Activated CD4-positive, alpha-beta memory T cell treated with anti-CD3 and anti-CD28 coated beads, Interleukin-2, amount 10 ng/mL, durations not matched to agents 7 days and 5 days (primary cell): ENCODE measurements at regions of chr12 and their contacts with region 1.

Region 1: DNA sequence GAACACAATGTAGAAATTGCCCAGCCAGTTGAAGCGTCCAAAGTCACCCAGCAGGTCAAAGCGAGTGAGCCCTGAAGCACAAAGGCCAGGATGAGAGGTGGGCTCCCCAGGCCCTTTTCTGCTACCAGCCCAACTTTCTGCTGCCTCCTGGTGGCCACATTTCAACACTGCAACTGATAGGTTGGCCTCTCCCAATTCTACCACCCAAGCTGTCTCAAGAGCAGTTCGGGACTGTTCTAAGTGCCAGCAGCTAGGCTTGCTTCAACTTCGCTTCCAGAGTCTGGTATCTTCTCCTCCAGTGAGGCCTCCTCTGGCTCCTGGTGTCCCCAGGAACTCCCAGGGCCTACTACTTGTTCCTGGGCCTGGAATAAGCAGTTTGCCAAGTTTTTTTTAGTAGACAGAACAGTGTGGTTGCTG is 3.4 kb upstream of the DHH start:
- DNase-seq: peak; percentile 69
- H3K4me3 Mint-ChIP-seq: no peak overlapping the region
- H3K27ac Mint-ChIP-seq: no peak overlapping the region
- H3K4me1 Mint-ChIP-seq: peaks cover 16% of the 10 kb centered on the region
- H3K27me3 Mint-ChIP-seq: peaks cover 25% of the 10 kb centered on the region

Region 2: GRCh38 chr12:49060237-49061156 is 37.5 kb before region 1 on chr12 and contains the start of gene KMT2D:
- CTCF ChIA-PET with region 1: interaction called, 103 read pairs
- POLR2A ChIA-PET with region 1: interaction called, 26 read pairs
- DNase-seq: peak; percentile 88
- H3K4me3 Mint-ChIP-seq: peak within 1 kb of the TSS; percentile 95
- H3K27ac Mint-ChIP-seq: peak within 1 kb of the TSS; percentile 91
- H3K4me1 Mint-ChIP-seq: peaks cover 50% of the 10 kb centered on the region
- H3K27me3 Mint-ChIP-seq: no peaks in the 10 kb centered on the region
- total RNA-seq, gene KMT2D: 82.3 to 87.8 TPM

Region 3: DNA sequence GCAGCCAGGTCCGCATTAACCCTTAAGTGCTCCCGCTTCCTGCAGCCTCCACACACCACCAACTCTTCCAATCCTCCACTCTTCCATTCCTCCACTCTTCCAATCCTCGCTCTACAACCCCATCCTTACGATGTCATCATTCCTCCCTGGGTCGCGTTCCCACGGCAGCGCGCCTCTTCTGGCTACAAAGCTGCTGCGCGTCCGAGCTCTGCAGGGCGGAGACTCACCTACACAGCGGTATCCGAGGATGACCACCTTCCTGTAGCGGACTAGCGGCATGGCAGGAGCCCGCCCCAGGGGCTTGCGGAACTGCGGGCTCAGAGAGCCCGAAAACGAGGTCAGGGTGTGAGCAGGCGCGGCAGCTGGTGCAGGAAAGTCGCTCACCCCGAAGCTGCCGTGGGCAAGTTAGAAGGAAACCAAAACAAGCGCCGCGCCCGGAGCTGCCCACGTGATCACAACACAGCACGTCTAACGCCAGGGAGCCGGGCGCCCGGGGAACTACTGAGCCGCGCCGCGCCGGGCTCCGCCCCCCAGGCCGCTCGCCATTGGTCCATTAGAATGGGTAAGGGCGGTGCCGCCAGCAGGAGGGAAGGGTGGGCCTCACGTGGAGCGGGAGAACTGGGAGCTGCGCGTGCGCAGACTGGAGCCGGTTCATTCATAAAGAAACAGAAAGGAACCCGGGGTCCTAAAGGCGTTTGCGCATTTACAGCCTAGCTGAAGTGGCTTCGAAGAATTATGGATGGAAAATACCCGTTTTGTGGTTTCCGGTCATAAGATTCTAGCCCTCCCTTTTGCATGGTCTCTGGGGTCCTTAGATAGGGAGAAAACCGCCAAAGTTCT is 28.3 kb before region 1 on chr12 and contains the start of gene RHEBL1:
- CTCF ChIA-PET with region 1: interaction called, 103 read pairs
- POLR2A ChIA-PET with region 1: interaction called, 26 read pairs
- DNase-seq: peak; percentile 100
- H3K4me3 Mint-ChIP-seq: peak within 1 kb of the TSS; percentile 97
- H3K27ac Mint-ChIP-seq: peak within 1 kb of the TSS; percentile 86
- H3K4me1 Mint-ChIP-seq: peaks cover 33% of the 10 kb centered on the region
- H3K27me3 Mint-ChIP-seq: no peaks in the 10 kb centered on the region
- total RNA-seq, gene RHEBL1: 14.8 to 15.8 TPM

Region 4: GRCh38 chr12:49110464-49111155 is 12.6 kb after region 1 on chr12 and contains the start of gene LMBR1L:
- CTCF ChIA-PET with region 1: interaction called, 46 read pairs
- POLR2A ChIA-PET with region 1: interaction called, 15 read pairs
- DNase-seq: peak; percentile 97
- H3K4me3 Mint-ChIP-seq: peak within 1 kb of the TSS; percentile 88
- H3K27ac Mint-ChIP-seq: peak within 1 kb of the TSS; percentile 82
- H3K4me1 Mint-ChIP-seq: peaks cover 31% of the 10 kb centered on the region
- H3K27me3 Mint-ChIP-seq: peaks cover 2% of the 10 kb centered on the region
- total RNA-seq, gene LMBR1L: 82.8 to 85.3 TPM

Region 5: DNA sequence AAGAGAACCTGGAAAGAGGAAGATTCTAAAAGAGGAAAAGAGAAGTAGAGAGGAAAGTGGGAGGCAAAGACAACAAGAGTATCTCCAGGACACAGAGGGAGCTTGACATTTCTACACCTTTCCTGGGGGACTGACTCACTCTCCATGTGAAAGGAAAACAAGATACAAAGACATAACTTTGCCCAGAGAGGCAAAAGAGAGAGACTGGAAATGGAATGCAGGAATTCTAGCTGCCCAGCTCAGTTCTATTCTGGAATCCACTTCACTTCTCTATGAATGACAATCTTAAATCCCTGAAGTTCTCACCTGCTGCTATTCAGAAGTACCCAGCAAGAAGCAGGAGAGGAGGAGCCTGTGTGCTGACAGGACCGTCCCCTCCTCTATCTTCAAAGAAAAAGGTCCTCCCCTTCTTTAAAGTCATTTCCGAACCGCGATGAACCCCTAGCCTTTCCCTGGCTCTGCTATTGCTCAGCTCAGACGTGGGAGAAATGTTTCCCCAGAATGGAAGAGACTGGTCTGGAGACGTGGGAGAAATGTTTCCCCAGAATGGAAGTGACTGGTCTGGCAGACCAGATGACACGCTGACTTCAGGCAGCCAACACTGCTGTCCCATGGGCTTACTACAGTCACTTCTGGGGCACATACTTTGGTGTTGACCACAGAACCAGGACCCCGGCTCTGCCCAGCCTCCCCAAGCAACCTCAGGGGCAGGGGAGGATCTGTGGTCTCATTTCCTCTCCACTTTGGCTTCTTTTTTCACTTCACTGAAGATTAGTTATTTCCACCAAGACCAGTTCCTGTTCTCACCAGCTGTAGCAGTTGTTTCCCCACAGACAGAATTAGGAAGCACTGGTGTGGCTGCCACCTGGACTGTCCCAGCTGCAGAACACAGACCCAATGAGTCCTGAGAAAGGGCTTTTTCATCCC is 600.8 kb after region 1 on chr12:
- CTCF ChIA-PET with region 1: no interaction called
- POLR2A ChIA-PET with region 1: no interaction called
- DNase-seq: peak; percentile 55
- H3K4me3 Mint-ChIP-seq: peak overlapping the region; percentile 57
- H3K27ac Mint-ChIP-seq: peak overlapping the region; percentile 77
- H3K4me1 Mint-ChIP-seq: peaks cover 44% of the 10 kb centered on the region
- H3K27me3 Mint-ChIP-seq: no peaks in the 10 kb centered on the region